ENCODE measurements at regions of chr14 and their contacts with region 1.

Region 1: DNA sequence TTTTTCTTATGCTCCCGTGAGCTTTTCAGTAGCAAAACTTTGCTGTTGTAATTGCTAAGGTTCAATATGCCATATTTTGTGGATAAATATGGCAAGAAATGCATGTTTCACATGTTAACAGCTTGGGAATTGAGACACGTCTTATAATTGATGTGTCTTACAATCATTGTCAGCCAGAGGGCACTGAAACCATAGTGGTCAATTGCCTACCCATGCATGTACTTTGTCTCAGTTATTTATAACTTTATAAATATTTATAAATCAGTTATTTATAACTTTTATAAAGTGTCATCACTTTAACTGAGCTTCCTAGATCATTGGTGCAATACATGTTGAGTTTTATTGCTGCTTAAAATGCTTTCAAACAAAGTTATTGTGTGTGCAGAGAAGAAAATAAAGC is 82.0 kb downstream of the CATSPERB start:
- DNase-seq: no peak
- H3K4me3 ChIP-seq: no peak overlapping the region
- H3K27ac ChIP-seq: no peak overlapping the region
- H3K4me1 ChIP-seq: peaks cover 0 to 17% (median 13%) of the 10 kb centered on the region in 3 donors
- H3K27me3 ChIP-seq: no peaks in the 10 kb centered on the region
- CTCF ChIP-seq: peak; percentile 38 to 73 (median 58)
- POLR2A ChIP-seq: no peak

Region 2: DNA sequence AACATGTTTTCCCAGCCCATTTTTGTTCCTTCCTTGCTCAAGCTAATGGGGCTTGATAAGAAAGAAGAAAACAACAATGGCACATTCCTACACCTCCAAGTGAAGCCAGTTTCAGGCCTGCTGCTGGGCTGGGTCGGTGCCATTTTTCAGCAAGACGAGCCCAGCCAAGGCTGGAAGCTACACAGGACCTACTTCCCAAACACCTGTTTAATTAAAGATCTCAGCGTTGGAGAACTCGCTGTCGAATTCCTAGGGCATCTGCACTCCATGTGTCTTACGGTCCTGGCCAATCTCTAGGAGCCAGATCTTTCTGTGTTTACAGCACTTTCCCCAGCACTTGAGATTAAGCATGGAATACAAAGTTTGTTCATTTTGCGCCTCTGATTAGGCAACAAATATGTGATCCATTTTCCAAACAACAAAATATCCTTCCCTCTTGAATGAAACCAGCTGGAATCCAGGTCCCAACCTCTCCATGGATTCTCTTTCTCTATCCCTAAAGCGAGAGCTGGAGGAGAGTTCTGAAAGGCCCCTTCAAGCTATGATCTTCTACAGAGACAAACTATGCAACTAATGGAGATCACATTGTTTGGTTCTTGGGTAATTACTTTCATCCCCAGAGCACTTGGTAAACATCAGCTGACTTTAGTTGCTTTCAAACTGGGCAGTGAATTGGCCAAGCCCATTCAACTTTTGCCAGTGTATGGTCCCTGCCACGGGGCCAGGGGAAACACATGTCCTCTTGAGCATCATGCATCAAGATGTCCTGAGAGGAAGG is 251.7 kb after region 1 on chr14:
- intact Hi-C with region 1: loop called (anchors 10 kb)
- DNase-seq: no peak
- H3K4me3 ChIP-seq: no peak overlapping the region
- H3K27ac ChIP-seq: peak overlapping the region in 2 of 4 donors; percentile 7 to 73
- H3K4me1 ChIP-seq: peaks cover 4 to 36% (median 6%) of the 10 kb centered on the region in 3 donors
- H3K27me3 ChIP-seq: peaks cover 0 to 9% (median 0%) of the 10 kb centered on the region in 4 donors
- CTCF ChIP-seq: no peak
- POLR2A ChIP-seq: no peak

Measured in esophagus squamous epithelium (tissue), 5 donors.